ENCODE measurements at regions of chr5 and their contacts with region 1.

Region 1: DNA sequence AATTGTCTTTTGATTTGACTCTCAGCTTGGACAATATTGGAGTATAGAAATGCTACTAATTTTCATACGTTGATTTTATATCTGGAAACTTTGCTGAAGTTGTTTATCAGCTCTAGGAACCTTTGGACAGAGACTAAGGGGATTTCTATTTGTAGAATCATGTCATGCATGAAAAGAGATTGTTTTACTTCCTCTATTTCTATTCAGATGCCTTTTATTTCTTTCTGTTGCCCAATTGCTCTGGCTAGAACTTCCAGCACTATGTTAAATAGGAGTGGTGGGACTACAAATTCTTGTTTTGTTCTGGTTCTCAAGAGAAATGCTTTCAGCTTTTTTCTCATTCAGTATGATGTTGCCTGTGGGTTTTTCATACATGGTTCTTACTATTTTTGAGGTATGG is 112.8 kb upstream of the CDH12 start:
- DNase-seq: no peak
- H3K4me3 ChIP-seq: no peak overlapping the region
- H3K27ac ChIP-seq: no peak overlapping the region
- H3K4me1 ChIP-seq: no peaks in the 10 kb centered on the region
- H3K27me3 ChIP-seq: no peaks in the 10 kb centered on the region
- CTCF ChIP-seq: no peak

Region 2: GRCh38 chr5:22901885-22902284 is 64.1 kb before region 1 on chr5:
- CTCF ChIA-PET with region 1: no interaction called
- dilution Hi-C with region 1: loop called (anchors 5 kb)
- in situ Hi-C with region 1: no loop called
- intact Hi-C with region 1: no loop called
- DNase-seq: no peak
- H3K4me3 ChIP-seq: no peak overlapping the region
- H3K27ac ChIP-seq: no peak overlapping the region
- H3K4me1 ChIP-seq: no peaks in the 10 kb centered on the region
- H3K27me3 ChIP-seq: no peaks in the 10 kb centered on the region
- CTCF ChIP-seq: no peak